MCF 10A (cell line): ENCODE measurements at regions of chr1 and their contacts with region 1.

Region 1: GRCh38 chr1:91282695-91283420 is 121.8 kb downstream of the HFM1 start:
- DNase-seq: peak; percentile 75
- H3K4me3 Mint-ChIP-seq: no peak overlapping the region
- H3K27ac Mint-ChIP-seq: no peak overlapping the region
- H3K4me1 Mint-ChIP-seq: no peaks in the 10 kb centered on the region
- H3K27me3 Mint-ChIP-seq: peaks cover 31% of the 10 kb centered on the region
- CTCF ChIP-seq: peak; percentile 69

Region 2: DNA sequence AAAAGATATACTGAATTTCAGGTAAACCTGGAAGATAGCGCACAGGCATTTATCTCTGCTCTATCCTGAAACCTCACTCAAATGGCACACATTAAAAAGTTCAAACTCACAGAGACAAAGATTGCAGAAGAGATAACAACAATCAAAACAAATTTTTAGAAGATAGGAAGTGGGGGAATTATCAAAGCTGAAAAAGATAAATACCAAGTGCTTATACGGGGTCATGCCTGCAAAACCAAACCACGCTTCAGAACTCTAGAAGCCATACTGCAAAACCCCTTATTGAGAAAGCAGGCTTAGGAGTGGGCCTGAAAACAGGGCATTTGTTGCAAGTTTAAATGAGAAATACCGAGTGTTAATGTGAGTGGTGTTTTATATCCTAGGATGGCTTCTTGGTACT is 642.5 kb before region 1 on chr1:
- CTCF ChIA-PET with region 1: no interaction called
- POLR2A ChIA-PET with region 1: no interaction called
- intact Hi-C with region 1: no loop called
- DNase-seq: no peak
- H3K4me3 Mint-ChIP-seq: no peak overlapping the region
- H3K27ac Mint-ChIP-seq: no peak overlapping the region
- H3K4me1 Mint-ChIP-seq: no peaks in the 10 kb centered on the region
- H3K27me3 Mint-ChIP-seq: peaks cover 47% of the 10 kb centered on the region
- CTCF ChIP-seq: no peak

Region 3: GRCh38 chr1:91397605-91398004 is 114.7 kb after region 1 on chr1:
- CTCF ChIA-PET with region 1: interaction called, 14 read pairs
- POLR2A ChIA-PET with region 1: interaction called, 3 read pairs
- intact Hi-C with region 1: loop called (anchors 1 kb)
- DNase-seq: no peak
- H3K4me3 Mint-ChIP-seq: no peak overlapping the region
- H3K27ac Mint-ChIP-seq: no peak overlapping the region
- H3K4me1 Mint-ChIP-seq: no peaks in the 10 kb centered on the region
- H3K27me3 Mint-ChIP-seq: peaks cover 81% of the 10 kb centered on the region
- CTCF ChIP-seq: no peak

Region 4: DNA sequence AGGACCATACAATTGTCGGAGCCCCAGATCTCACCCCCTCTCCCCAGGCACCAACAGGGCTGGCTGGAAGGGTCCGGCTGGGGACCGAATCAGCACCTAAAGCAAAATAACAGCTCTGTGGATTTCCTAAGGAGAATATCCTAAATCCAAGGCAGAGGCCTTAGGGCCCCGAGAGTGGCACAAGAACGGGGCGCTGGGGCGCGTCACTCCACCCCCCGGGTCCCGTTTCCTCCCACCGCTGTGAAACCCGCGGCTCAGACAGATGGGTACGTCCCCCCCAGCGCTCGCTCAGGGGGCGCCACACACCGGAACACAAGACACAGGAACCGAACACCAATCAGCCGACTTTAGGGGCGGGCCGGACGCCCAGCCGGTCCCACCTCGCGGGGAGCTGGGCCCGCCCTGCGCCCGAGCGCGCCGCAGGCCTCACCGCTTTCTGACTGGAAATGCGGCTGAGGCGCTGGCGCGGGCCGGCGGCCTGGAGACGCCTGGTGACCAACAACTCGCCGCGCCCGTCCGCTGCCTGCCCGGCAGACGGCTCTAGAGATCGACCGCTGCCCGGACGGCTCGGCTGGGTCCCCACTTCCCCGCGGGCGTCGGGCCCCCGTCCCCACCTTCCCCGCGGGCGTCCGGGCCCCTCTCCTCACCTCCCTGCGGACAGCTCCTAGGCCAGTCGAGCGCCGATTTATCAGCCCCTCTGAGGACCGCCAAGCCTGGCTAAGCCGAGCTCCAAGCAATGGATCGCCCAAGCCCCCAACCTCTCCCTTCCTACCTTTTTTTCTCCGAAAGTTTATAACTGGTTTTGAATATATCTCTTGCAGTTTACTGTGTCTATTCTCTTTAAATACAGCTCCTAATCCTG is 121.5 kb after region 1 on chr1 and contains the start of gene HFM1:
- CTCF ChIA-PET with region 1: interaction called, 21 read pairs
- POLR2A ChIA-PET with region 1: interaction called, 3 read pairs
- intact Hi-C with region 1: loop called (anchors 1 kb)
- DNase-seq: no peak
- H3K4me3 Mint-ChIP-seq: no peak within 1 kb of the TSS
- H3K27ac Mint-ChIP-seq: no peak within 1 kb of the TSS
- H3K4me1 Mint-ChIP-seq: no peaks in the 10 kb centered on the region
- H3K27me3 Mint-ChIP-seq: peaks cover 82% of the 10 kb centered on the region
- CTCF ChIP-seq: no peak
- total RNA-seq, gene HFM1: not detected in 2 replicates

Region 5: GRCh38 chr1:91500756-91501522 is 218.1 kb after region 1 on chr1 and contains the start of gene CDC7:
- CTCF ChIA-PET with region 1: interaction called, 3 read pairs
- POLR2A ChIA-PET with region 1: no interaction called
- intact Hi-C with region 1: loop called (anchors 1 kb)
- DNase-seq: peak; percentile 89
- H3K4me3 Mint-ChIP-seq: no peak within 1 kb of the TSS
- H3K27ac Mint-ChIP-seq: no peak within 1 kb of the TSS
- H3K4me1 Mint-ChIP-seq: peaks cover 17% of the 10 kb centered on the region
- H3K27me3 Mint-ChIP-seq: no peaks in the 10 kb centered on the region
- CTCF ChIP-seq: peak; percentile 38
- total RNA-seq, gene CDC7: 4.0 and 8.0 TPM in 2 replicates

Region 6: DNA sequence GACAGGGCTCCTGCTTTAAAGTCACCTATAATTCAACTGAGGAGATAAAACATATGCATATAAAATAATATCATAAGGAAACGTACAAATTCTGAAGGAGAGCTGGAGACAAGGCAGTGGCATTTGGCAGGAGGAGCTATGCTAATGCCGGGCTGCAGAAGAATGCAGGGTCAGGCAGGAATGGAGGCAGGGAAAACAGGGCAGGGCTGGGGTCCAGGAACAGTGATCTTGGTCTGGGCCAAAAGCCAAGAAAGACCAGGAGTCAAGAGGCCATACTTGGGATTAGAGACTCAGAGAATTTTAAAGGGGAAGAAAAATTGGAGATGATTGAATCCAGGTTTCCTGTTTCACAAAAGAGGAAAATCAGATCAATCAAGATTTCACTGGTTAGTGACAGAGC is 646.4 kb after region 1 on chr1:
- CTCF ChIA-PET with region 1: interaction called, 9 read pairs
- POLR2A ChIA-PET with region 1: no interaction called
- intact Hi-C with region 1: loop called (anchors 5 kb)
- DNase-seq: no peak
- H3K4me3 Mint-ChIP-seq: no peak overlapping the region
- H3K27ac Mint-ChIP-seq: no peak overlapping the region
- H3K4me1 Mint-ChIP-seq: peaks cover 13% of the 10 kb centered on the region
- H3K27me3 Mint-ChIP-seq: no peaks in the 10 kb centered on the region
- CTCF ChIP-seq: no peak

Region 7: DNA sequence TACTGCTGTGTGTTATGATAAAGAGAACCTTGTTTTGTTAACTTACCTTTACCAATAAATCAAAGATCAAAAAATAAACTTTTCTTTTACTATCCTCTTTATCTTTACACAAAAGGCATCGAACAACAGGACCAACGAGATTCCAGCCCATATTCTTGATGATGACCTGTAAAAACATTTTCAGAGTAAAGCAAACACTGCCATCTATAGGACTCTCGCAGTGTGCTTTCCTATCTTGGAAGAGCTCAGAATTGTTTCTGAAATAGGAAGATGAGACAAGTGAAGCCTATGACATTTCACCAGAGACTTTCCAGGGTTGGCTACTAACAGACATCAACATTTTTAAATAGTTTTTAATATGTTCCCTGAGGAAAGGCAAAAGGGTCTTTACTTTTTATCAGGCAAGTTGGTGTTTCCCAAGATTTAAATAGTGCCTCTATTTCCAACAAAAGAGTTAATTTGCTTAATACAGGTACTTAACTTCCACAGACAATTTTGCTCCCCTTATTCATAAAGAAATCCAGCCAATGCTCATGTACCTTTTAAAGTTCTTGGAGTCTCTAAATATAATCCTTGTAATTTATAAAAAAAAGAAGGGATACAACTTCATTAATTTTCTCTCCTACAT is 1008.6 kb after region 1 on chr1:
- CTCF ChIA-PET with region 1: no interaction called
- POLR2A ChIA-PET with region 1: no interaction called
- intact Hi-C with region 1: loop called (anchors 5 kb)
- DNase-seq: peak; percentile 63
- H3K4me3 Mint-ChIP-seq: no peak overlapping the region
- H3K27ac Mint-ChIP-seq: no peak overlapping the region
- H3K4me1 Mint-ChIP-seq: peaks cover 6% of the 10 kb centered on the region
- H3K27me3 Mint-ChIP-seq: no peaks in the 10 kb centered on the region
- CTCF ChIP-seq: peak; percentile 67